Dendritic cell treated with granulocyte-macrophage colony-stimulating factor and Interleukin-4, amounts not matched to agents 40 ng/mL and 50 ng/mL, for 4 days (primary cell): ENCODE measurements at regions of chr18 and their contacts with region 1.

Region 1: GRCh38 chr18:33201509-33201926 is 239.0 kb downstream of the CCDC178 start:
- H3K4me3 Mint-ChIP-seq: no peak overlapping the region
- H3K27ac Mint-ChIP-seq: no peak overlapping the region
- H3K4me1 Mint-ChIP-seq: peaks cover 11% of the 10 kb centered on the region
- H3K27me3 Mint-ChIP-seq: peaks cover 3% of the 10 kb centered on the region

Region 2: GRCh38 chr18:32714571-32715148 is 486.9 kb before region 1 on chr18:
- intact Hi-C with region 1: loop called (anchors 10 kb)
- H3K4me3 Mint-ChIP-seq: no peak overlapping the region
- H3K27ac Mint-ChIP-seq: no peak overlapping the region
- H3K4me1 Mint-ChIP-seq: no peaks in the 10 kb centered on the region
- H3K27me3 Mint-ChIP-seq: no peaks in the 10 kb centered on the region

Region 3: DNA sequence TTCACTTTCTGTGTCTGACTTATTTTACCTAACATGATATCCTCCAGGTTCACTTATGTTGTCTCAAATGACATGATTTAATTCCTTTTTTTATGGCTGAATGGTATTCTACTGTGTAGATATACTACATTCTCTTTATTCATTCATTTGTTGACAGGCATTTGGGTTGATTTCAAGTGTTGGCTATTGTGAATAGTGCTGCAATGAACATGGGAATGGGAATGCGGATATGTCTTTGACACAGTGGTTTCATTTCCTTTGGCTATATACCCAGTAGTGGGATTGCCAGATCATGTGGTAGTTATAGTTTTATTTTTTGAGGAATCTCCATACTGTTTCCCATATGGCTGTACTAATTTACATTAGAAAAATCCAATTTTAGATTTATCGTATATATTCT is 233.3 kb before region 1 on chr18:
- intact Hi-C with region 1: loop called (anchors 10 kb)
- H3K4me3 Mint-ChIP-seq: no peak overlapping the region
- H3K27ac Mint-ChIP-seq: no peak overlapping the region
- H3K4me1 Mint-ChIP-seq: no peaks in the 10 kb centered on the region
- H3K27me3 Mint-ChIP-seq: no peaks in the 10 kb centered on the region

Region 4: DNA sequence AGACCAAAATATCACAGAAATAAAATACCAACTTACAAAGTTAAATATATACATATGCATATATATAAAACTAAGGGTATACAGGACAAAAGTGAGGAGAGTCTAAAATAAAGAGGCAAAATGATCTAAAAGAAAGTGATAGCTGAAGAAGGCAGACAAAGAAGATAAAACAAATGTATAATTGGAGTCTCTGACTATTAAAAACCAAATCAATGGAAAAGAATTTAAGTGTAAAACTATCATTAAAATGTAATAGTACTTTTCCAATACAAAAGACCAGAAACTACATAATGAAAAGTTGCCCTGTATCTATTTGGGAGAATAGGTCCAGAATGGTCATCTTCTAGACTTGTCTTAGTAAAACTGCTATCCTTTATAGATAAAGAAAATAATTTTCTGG is 161.3 kb before region 1 on chr18:
- intact Hi-C with region 1: loop called (anchors 10 kb)
- H3K4me3 Mint-ChIP-seq: no peak overlapping the region
- H3K27ac Mint-ChIP-seq: no peak overlapping the region
- H3K4me1 Mint-ChIP-seq: no peaks in the 10 kb centered on the region
- H3K27me3 Mint-ChIP-seq: no peaks in the 10 kb centered on the region